ENCODE measurements at regions of chr15 and their contacts with region 1.

Region 1: DNA sequence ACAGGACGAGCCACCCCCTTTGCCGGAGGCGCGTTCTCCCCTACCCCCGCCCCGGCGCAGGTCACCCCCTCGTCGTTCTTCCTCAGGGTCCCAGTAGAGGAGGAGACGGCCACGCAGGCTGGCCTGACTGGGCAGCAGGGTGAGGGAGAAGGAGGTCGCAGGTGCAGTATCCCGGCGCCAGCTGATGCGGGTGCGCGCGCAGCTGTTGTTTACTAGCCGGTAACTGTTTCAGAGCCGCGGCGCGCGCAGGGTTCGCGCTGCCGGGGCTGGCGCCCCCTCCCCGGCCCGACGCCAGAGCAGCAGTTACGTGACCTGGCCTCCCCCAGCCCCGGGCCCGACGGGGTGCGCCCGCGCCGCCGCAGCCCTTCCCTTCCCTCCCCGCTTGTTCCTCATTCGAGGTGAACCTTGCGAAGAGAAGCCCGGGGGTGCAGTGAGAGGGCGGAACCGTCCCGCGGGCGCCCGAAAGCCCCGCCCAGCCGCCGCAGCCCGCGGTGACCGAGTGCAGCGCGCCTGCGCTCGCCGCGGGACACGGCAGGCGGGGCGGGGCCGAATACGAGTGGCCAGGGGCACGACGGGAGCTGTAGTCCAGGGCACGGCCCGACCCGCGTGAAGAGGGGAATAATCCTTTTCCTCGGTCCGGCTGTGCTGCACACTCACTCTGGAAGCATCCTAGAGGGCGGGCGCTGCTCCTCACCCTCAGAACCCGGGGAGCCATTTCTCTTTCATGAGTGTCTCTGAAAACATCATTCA is at the start of gene SLC12A6:
- H3K4me3 Mint-ChIP-seq: peak within 1 kb of the TSS; percentile 95
- H3K27ac Mint-ChIP-seq: peak within 1 kb of the TSS; percentile 90
- H3K4me1 Mint-ChIP-seq: peaks cover 51% of the 10 kb centered on the region
- H3K27me3 Mint-ChIP-seq: no peaks in the 10 kb centered on the region

Region 2: DNA sequence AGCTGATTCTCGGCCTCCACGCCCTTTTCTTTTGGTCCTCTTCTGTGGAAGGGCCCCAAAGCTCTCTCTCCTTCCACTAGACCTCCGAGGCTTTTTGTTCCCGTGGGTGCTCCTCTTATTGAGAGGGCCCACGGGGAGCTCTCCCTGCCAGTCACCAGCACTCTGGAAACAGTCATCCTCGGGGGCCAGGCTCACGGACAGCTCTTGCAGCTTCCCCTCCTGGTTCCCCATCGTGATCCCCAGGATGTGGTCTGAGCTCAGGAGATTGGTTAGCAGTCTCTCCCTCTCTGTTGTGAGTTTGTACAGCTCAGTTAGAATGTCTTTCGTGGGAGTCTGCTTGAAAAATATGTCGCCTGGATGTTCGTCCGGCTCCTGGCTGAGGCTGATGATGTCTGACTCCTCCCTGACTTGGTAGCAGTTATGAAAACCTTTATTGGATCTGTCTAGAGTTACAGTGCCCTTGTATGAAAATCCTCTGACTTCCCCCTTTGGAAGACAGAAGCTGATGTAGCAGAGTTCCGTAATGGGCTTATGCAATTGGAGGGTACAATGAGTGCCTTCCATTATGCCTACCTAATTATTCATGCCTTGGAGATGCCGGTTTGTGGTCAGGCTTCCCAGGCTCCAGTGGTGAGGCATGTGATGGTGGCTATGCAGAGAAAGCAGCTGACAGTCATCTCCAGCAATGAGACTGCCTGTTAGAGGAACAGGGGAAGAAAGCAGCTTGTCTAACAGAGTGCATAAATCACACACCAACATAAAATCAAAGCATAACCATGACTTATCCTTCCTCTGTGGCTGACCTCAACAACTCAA is 1183.2 kb before region 1 on chr15:
- intact Hi-C with region 1: loop called (anchors 10 kb)
- H3K4me3 Mint-ChIP-seq: peak overlapping the region; percentile 54
- H3K27ac Mint-ChIP-seq: peak overlapping the region; percentile 83
- H3K4me1 Mint-ChIP-seq: peaks cover 68% of the 10 kb centered on the region
- H3K27me3 Mint-ChIP-seq: no peaks in the 10 kb centered on the region

Region 3: DNA sequence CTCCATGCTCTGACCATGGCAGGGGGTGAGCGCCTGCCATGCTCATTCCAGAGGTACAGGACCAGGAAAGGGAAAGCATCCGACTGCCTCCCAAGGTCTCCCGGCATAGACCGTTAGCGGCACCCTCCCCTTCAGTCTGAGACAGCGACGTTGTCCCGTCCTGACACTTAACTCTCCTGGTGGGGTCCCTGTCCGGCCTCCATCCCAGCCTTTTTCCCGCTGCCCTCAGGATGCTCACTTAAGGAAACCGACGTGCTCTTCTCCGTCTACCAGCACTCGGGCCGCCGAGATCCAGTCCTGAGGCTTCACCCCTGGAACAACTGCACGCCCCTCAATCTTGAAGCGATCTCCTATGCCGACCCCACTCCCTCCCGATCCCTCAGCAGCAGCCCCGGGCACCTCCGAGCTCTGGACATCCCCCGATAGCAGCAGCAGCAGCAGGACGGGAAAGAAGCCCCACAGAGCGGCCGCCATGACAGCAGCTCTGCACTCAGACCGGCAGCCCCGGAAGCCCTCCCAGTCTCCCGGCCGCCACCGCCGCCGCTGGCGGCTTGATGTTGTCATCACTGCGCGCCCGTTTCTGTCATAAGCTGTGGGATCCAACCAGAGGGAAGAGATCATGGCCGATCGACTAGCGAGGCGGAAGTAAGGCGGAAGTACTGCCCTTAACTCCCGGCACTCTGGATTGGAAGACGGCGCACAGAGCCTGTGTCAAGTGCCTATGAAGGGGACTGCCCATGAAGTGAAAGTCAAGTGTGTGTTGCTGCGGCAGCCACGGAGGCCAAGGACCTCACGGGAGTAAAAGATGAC is 236.2 kb before region 1 on chr15 and contains the starts of genes EMC7 and PGBD4:
- intact Hi-C with region 1: loop called (anchors 5 kb)
- H3K4me3 Mint-ChIP-seq: peak within 1 kb of the TSS; percentile 99
- H3K27ac Mint-ChIP-seq: peak within 1 kb of the TSS; percentile 99
- H3K4me1 Mint-ChIP-seq: peaks cover 11% of the 10 kb centered on the region
- H3K27me3 Mint-ChIP-seq: no peaks in the 10 kb centered on the region

Region 4: GRCh38 chr15:34223904-34224596 is 113.7 kb before region 1 on chr15:
- intact Hi-C with region 1: loop called (anchors 5 kb)
- H3K4me3 Mint-ChIP-seq: peak overlapping the region; percentile 92
- H3K27ac Mint-ChIP-seq: peak overlapping the region; percentile 100
- H3K4me1 Mint-ChIP-seq: peaks cover 20% of the 10 kb centered on the region
- H3K27me3 Mint-ChIP-seq: no peaks in the 10 kb centered on the region

Region 5: GRCh38 chr15:34279341-34279740 is 58.4 kb before region 1 on chr15:
- intact Hi-C with region 1: no loop called
- H3K4me3 Mint-ChIP-seq: no peak overlapping the region
- H3K27ac Mint-ChIP-seq: no peak overlapping the region
- H3K4me1 Mint-ChIP-seq: peaks cover 6% of the 10 kb centered on the region
- H3K27me3 Mint-ChIP-seq: no peaks in the 10 kb centered on the region

Region 6: DNA sequence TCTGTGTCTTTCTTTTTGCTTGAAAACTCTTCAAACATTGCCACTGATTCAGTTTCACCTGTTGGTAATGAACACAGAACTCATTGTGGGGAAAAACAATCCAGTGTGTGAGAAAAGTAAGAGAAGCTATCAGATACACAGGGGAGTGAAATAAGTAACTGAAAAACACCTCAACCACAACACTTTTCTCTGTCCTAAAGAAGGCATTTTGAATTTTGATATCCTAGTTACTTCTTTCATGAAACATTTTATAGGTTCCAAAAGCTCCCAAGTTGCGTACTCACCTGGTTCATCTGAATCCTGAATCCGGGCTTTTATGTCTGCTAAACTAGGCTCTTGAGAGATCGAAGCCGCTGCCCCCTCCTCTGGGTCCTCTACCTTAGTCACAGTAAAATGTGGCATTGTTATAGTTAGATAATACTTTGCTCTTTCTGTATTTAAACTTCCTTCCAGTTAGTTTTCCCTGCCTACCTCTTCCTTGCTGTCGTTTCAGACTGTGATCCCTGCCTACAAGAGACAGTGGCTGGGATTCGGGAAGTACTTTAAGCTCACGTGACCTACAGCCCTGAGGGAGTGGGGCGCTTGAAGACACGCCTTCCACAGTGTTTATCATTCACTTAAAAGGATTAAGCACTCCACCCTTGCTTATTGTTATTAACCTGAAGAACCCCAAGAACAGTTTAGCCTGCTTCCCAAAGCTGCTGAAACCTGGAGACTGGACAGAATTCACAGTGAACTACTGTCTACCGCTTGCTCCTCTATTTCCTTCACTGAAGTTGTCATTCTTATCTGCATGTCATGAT is 19.3 kb before region 1 on chr15:
- intact Hi-C with region 1: loop called (anchors 2 kb)
- H3K4me3 Mint-ChIP-seq: peak overlapping the region; percentile 83
- H3K27ac Mint-ChIP-seq: peak overlapping the region; percentile 90
- H3K4me1 Mint-ChIP-seq: peaks cover 21% of the 10 kb centered on the region
- H3K27me3 Mint-ChIP-seq: no peaks in the 10 kb centered on the region

Region 7: DNA sequence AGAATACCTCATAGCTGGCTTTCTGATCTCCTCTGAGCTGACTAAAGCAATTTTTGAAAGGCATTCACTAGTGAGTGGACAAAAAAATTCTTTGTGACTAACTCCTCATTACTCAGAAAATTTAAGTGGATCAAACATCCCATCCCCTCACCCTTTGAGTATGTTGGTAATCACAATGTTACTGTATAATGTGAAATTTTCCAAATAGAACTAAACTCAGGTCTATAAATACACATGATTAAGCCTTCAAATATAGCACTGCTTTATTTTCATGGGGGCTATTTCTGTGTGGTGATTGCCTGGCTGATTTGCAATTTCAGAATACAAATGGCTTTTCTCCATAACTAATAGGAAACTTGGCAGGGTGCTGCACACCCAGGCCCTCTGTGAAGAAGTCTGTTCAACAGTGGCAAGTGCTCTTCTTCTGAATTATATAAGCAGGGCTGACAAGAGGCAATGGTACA is 503.6 kb after region 1 on chr15:
- intact Hi-C with region 1: no loop called
- H3K4me3 Mint-ChIP-seq: no peak overlapping the region
- H3K27ac Mint-ChIP-seq: no peak overlapping the region
- H3K4me1 Mint-ChIP-seq: no peaks in the 10 kb centered on the region
- H3K27me3 Mint-ChIP-seq: no peaks in the 10 kb centered on the region

Measured in dendritic cell treated with granulocyte-macrophage colony-stimulating factor and Interleukin-4, amounts not matched to agents 40 ng/mL and 50 ng/mL, for 4 days (primary cell).